ENCODE measurements at regions of chr13 and their contacts with region 1.

Region 1: DNA sequence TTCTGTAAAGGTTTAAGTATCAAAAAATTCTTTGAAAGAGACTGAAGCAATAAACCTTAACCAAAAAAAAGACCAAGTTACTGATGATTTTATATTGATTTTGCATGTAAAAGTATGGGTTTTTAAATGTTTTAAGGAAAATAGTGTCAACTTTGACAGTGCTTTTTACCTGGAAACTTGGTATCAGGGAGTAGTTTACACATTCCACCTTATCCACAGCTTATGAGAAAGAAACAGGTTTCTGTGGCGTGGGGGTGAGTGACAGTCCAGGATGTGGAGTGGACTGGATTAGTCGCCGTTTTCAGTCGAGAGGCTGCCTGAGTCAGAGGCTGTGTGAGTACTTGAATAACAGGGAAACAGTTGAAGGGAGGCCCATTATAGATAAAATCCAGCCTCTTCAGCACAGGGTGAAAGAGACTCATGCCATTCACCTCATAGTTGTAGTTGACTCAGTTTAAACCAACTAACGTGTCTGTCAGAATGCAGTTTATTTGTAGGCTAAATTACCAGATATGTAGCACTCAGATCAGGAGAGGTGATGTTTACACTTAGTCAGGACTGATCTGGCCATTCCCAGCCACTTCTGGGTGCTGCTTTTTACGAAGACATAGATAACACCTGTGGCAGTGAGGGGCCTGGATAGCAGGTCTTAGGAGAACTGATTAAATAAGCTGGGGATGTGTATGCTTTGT is 595 bp upstream of the GPR183 start:
- DNase-seq: peak; percentile 64
- ATAC-seq: peak; percentile 67
- H3K4me3 Mint-ChIP-seq: peak overlapping the region; percentile 73
- H3K27ac Mint-ChIP-seq: peak overlapping the region; percentile 89
- H3K4me1 Mint-ChIP-seq: peaks cover 76% of the 10 kb centered on the region
- H3K27me3 Mint-ChIP-seq: no peaks in the 10 kb centered on the region

Region 2: GRCh38 chr13:99322297-99323103 is 14.7 kb after region 1 on chr13:
- CTCF ChIA-PET with region 1: interaction called, 10 read pairs
- POLR2A ChIA-PET with region 1: no interaction called
- DNase-seq: peak; percentile 40
- ATAC-seq: peak; percentile 79
- H3K4me3 Mint-ChIP-seq: peak overlapping the region; percentile 51
- H3K27ac Mint-ChIP-seq: peak overlapping the region; percentile 89
- H3K4me1 Mint-ChIP-seq: peaks cover 61% of the 10 kb centered on the region
- H3K27me3 Mint-ChIP-seq: no peaks in the 10 kb centered on the region

Region 3: DNA sequence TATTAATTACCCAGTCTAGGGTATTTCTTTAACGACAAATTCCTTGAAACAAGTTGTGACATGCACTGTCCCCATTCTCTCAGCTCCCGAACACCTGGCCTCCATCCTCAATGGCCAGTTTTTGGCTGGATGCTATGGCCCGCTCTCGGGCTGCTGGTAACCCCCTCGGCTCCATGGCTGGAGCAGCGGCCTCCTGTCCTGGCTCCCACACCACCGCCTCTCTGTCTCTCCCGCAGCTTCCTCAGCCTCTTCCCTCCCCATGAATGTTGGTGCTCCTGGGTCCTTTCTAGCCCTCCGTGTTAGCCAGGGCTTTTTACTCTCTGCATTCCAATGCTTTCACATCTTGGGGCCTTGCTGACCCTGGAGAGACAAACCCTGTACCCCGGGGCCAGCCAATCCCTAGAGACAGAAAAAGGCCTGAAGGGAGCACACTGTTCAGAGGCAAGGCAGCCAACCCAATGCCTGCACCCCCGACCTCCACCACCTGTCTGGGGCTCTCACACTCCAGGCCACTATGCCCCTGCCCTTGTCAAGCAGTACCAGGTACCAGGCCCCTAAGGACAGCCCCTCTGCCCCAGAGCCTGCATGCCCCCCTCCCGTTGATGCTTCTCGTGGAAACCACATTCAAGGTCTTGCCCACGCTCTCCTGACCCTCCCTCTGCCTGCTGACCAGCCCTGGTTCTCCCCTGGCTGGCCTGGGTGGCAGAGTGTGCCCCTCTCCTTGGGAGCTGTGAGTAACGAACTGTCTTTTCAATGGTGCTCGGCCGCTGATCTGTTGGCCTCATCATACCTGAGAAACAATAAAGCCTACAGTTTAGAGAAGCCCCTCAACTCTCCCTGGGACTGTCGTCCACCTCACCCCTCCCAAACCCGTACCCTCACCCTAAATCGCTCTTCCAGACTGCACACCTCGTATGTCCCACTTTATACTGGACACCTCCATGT is 86.3 kb after region 1 on chr13:
- CTCF ChIA-PET with region 1: no interaction called
- POLR2A ChIA-PET with region 1: no interaction called
- DNase-seq: no peak
- ATAC-seq: no peak
- H3K4me3 Mint-ChIP-seq: no peak overlapping the region
- H3K27ac Mint-ChIP-seq: no peak overlapping the region
- H3K4me1 Mint-ChIP-seq: peaks cover 6% of the 10 kb centered on the region
- H3K27me3 Mint-ChIP-seq: no peaks in the 10 kb centered on the region

Region 4: GRCh38 chr13:99484473-99484872 is 176.7 kb after region 1 on chr13:
- CTCF ChIA-PET with region 1: no interaction called
- POLR2A ChIA-PET with region 1: no interaction called
- DNase-seq: peak; percentile 63
- ATAC-seq: peak; percentile 95
- H3K4me3 Mint-ChIP-seq: peak overlapping the region; percentile 32
- H3K27ac Mint-ChIP-seq: peak overlapping the region; percentile 10
- H3K4me1 Mint-ChIP-seq: peaks cover 40% of the 10 kb centered on the region
- H3K27me3 Mint-ChIP-seq: no peaks in the 10 kb centered on the region

Measured in activated CD8-positive, alpha-beta T cell treated with anti-CD3 and anti-CD28 coated beads, Interleukin-2, amount 10 ng/mL, durations not matched to agents 7 days and 5 days (primary cell).